ENCODE measurements at regions of chr1 and their contacts with region 1.

Region 1: DNA sequence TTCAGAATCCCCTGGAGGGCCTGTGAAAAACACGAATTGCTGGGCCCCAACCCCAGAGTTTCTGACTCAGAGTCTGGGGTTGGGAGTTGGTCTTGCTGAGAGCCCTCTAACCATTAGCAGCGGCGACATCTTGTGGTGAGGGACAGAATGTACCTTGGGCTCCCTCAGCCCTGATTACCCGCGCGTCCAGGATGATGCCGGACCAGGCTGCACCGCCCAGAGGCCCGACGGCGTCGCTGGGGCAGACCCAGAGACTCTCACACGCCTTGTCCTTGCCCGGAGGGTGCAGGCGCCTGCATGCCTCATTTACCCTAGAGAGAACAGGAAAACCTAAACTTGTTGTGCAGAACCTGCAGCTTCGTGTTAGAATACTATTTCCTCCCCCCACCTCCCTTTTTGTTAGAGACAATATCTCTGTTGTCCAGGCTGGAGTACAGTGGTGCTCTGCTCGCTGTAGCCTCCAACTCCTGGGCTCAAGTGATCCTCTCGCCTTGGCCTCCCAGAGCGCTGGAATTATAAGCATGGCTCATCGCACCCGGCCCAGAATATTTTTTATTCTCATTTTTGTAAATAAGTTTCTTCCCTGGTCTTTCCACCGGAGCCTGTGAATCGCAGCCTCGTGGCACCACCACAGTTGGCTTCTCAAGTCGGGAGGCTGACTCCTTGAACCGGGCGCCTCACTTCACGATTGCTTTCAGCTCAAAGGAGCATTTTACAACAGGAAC is 22.2 kb upstream of the RD3 start:
- DNase-seq: peak; percentile 82
- ATAC-seq: peak; percentile 82
- H3K4me3 ChIP-seq: peak overlapping the region in 1 of 3 experiments; percentile 60; a peak in 2 of 6 replicates
- H3K27ac ChIP-seq: no peak overlapping the region
- H3K4me1 ChIP-seq: peaks cover 49% of the 10 kb centered on the region
- H3K27me3 ChIP-seq: peaks cover 0 to 12% of the 10 kb centered on the region in 2 experiments; a peak in 2 of 5 replicates
- CTCF ChIP-seq: peak; percentile 95
- EP300 ChIP-seq: no peak
- POLR2A ChIP-seq: no peak
- RAD21 ChIP-seq: peak; percentile 81

Region 2: GRCh38 chr1:211415700-211416099 is 98.5 kb before region 1 on chr1:
- CTCF ChIA-PET with region 1: no interaction called
- POLR2A ChIA-PET with region 1: no interaction called
- in situ Hi-C with region 1: no loop called
- intact Hi-C with region 1: loop called (anchors 2 kb)
- DNase-seq: no peak
- ATAC-seq: no peak
- H3K4me3 ChIP-seq: peak overlapping the region; percentile 36 to 63 (median 40); a peak in 4 of 6 replicates
- H3K27ac ChIP-seq: peak overlapping the region; percentile 50
- H3K4me1 ChIP-seq: peaks cover 19% of the 10 kb centered on the region
- H3K27me3 ChIP-seq: no peaks in the 10 kb centered on the region
- CTCF ChIP-seq: no peak
- EP300 ChIP-seq: no peak
- POLR2A ChIP-seq: no peak
- RAD21 ChIP-seq: no peak

Region 3: GRCh38 chr1:211469938-211470529 is 44.2 kb before region 1 on chr1:
- CTCF ChIA-PET with region 1: interaction called, 27 read pairs
- POLR2A ChIA-PET with region 1: no interaction called
- in situ Hi-C with region 1: no loop called
- intact Hi-C with region 1: loop called (anchors 1 kb)
- DNase-seq: peak; percentile 72
- ATAC-seq: peak; percentile 100
- H3K4me3 ChIP-seq: no peak overlapping the region
- H3K27ac ChIP-seq: no peak overlapping the region
- H3K4me1 ChIP-seq: peaks cover 6% of the 10 kb centered on the region; the same call in 1 of the 2 replicates
- H3K27me3 ChIP-seq: peaks cover 0 to 12% of the 10 kb centered on the region in 2 experiments; a peak in 2 of 5 replicates
- CTCF ChIP-seq: peak; percentile 91
- EP300 ChIP-seq: no peak
- POLR2A ChIP-seq: no peak
- RAD21 ChIP-seq: peak; percentile 50

Region 4: GRCh38 chr1:211492511-211493132 is 21.6 kb before region 1 on chr1:
- CTCF ChIA-PET with region 1: no interaction called
- POLR2A ChIA-PET with region 1: no interaction called
- in situ Hi-C with region 1: no loop called
- intact Hi-C with region 1: no loop called
- DNase-seq: no peak
- ATAC-seq: no peak
- H3K4me3 ChIP-seq: no peak overlapping the region
- H3K27ac ChIP-seq: no peak overlapping the region
- H3K4me1 ChIP-seq: no peaks in the 10 kb centered on the region
- H3K27me3 ChIP-seq: peaks cover 6 to 57% of the 10 kb centered on the region in 2 experiments; a peak in 4 of 5 replicates
- CTCF ChIP-seq: no peak
- EP300 ChIP-seq: no peak
- POLR2A ChIP-seq: no peak
- RAD21 ChIP-seq: no peak

Region 5: DNA sequence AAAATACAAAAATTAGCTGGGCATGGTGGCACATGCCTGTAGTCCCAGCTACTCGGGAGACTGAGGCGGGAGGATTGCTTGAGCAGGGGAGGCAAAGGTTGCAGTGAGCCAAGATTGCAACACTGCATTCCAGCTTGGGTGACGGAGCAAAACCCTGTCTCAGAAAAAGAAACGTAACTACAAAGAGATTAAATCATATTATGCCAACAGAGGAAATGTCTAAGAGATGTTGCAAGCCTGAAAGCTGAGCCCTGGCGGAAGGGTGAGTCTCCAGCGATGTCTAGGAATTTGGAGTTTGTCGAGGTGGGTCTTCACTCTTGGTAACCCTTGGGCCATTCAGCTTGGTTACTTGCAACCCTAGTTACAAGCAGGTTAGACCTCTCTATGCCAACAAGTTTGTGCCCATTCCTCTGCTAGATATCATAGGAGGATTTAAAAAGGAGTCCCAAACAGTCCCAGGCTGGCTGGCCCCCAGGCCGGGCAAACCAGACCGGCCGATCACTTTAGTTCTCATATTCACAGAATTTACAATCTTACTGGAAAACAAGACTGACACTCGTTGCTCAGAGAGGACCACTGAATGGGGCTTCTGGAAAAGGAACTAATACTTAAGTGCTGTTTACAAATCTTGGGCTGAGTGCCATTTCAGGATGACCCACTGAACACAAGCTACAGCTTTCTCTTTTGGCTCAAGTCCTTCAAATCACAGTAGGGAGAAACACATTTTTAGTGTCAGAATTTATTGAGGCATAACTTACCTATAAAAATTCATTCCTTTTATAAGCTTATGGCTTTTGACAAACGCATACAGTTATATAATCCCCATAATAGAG is 37.7 kb after region 1 on chr1:
- CTCF ChIA-PET with region 1: no interaction called
- POLR2A ChIA-PET with region 1: interaction called, 4 read pairs
- in situ Hi-C with region 1: no loop called
- intact Hi-C with region 1: loop called (anchors 5 kb)
- DNase-seq: peak; percentile 19
- ATAC-seq: no peak; the same call in 2 of the 3 replicates
- H3K4me3 ChIP-seq: no peak overlapping the region
- H3K27ac ChIP-seq: no peak overlapping the region
- H3K4me1 ChIP-seq: peaks cover 36% of the 10 kb centered on the region
- H3K27me3 ChIP-seq: peaks cover 0 to 18% of the 10 kb centered on the region in 2 experiments; a peak in 2 of 5 replicates
- CTCF ChIP-seq: no peak
- EP300 ChIP-seq: no peak
- POLR2A ChIP-seq: no peak
- RAD21 ChIP-seq: no peak